ENCODE measurements at regions of chr2 and their contacts with region 1.

Region 1: DNA sequence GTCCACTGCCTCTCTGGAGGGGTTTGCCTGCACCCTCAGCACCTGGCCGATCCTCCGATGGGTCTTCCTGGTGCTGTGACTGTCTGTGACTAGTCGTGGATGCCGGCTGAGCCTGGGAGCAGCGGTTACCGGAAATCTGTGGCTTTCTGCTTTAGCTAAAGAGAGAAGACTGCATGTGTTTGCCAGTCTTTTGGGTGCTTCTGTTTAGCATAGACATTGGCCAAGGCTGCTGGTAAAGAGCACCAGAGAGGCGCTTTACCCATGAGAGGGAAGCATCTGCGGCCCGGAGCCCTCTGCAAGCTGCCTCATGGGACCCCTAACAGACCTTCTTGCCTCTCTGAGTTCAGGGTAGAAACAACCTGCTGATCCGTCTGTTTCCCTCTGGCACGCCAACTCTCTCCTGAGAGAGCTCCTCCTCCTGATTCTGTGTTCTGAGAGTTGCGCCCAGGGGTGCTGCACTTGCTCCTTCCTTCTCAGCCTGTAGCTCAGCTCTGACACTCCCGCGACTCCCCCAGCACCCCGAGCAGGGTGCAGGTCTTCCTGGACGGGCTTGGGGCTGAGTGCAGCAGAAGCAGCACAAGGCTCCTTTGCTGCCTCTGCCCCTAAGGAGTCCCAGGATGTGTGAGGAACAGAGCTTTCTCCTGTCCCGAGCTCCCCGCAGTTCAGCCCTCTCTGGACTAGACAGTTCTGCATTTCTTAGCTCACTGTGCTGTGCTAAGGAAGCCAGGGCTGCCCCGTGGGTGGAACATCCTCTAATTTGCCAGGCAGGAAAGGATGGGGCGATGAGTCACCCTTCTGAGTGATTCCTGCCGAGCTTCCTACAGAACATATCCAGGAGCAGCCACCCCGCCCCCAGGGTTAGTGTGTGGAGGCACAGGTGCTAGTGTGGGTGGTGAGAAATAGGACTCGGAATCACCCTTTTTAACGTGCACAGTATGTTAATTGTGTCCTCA is 203.2 kb downstream of the SH3RF3 start:
- DNase-seq: peak; percentile 91
- ATAC-seq: peak; percentile 90 to 97

Region 2: GRCh38 chr2:109128048-109128465 is 204.1 kb before region 1 on chr2:
- intact Hi-C with region 1: loop called in 1 of 2 experiments (anchors 5 kb)
- DNase-seq: peak; percentile 89
- ATAC-seq: peak; percentile 84 to 90

Region 3: DNA sequence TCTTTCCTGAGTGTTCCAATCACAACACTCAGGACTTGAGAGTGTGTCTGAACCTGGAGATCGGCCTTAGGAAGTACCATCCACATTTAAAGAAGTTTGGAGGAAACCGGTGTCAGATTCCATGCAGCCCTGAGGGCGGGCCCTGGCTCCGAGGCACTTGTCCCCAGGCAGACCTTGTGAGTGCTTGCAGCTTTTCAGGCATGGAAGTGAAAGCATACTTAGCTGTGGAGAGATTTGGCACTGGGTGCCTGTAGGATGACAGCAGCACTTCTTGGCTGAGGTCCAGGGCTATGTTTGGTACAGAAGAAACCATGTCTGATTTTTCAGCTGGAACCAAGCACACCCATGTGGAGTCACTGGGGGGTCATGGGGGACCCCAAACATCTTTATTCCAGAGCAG is 50.8 kb after region 1 on chr2:
- intact Hi-C with region 1: loop called in 1 of 2 experiments (anchors 10 kb)
- DNase-seq: peak; percentile 78
- ATAC-seq: peak; percentile 91 to 97